ENCODE measurements at regions of chr19 and their contacts with region 1.

Region 1: DNA sequence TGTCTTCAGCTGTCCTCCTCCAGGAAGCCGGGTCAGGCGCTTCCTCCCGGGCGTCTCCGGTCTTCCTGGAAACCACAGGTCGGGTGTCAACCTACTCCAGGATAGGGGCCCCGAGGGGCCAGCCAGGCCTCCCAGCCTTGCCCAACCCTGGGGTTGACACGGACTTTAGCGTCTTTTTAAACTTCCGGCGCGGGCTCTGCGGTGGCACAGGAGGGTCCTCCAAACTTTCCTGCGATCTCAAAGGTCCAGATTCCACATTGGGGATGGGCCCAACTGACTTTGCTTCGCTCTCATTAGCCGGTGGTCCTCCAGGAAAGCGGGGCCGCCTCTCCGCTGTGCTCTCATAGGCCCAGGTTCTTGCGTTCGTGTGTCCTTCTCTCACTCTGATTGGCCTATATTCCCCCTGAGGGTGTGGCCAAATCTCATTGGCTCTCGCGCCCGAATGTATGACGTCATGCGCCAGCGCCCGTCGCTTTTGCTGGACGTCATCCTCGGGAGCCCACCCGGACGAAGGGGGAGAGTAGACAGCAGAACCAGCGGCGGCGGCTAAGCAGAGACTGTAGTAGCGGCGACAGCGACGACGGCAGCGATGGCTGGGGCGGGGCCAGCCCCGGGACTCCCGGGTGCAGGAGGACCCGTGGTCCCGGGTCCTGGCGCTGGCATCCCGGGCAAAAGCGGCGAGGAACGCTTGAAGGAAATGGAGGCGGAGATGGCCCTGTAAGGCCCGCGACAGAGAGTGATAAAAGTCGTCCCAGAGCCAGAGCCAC is at the start of gene RBM42:
- DNase-seq: peak; percentile 96
- total RNA-seq, gene RBM42: 56.2 TPM

Region 2: DNA sequence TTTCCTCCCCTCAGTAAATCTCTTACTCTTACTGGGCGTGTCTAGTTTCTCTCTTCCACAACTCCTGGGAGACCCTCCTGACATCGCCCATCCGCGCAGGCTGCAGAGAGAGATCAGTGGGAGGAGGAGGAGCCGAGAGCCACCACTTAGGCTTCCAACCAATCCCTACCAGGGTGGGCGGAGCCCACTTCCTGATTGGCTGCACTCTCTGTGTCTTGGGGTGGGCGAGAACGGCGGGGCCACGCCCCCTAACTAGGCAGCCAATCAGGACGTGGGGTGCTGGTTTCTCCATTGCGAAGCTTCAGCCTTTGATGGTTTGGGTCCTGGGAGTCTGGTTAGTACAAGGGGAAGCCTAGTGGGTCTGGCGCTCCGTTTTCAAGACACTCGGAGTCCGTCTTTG is 42.9 kb before region 1 on chr19 and contains the start of gene PMIS2:
- intact Hi-C with region 1: no loop called
- DNase-seq: no peak
- total RNA-seq, gene PMIS2: not detected

Region 3: GRCh38 chr19:35612559-35613321 is 16.0 kb before region 1 on chr19 and contains the start of gene HAUS5:
- intact Hi-C with region 1: loop called (anchors 2 kb)
- DNase-seq: peak; percentile 97
- total RNA-seq, gene HAUS5: 5.9 TPM

Region 4: DNA sequence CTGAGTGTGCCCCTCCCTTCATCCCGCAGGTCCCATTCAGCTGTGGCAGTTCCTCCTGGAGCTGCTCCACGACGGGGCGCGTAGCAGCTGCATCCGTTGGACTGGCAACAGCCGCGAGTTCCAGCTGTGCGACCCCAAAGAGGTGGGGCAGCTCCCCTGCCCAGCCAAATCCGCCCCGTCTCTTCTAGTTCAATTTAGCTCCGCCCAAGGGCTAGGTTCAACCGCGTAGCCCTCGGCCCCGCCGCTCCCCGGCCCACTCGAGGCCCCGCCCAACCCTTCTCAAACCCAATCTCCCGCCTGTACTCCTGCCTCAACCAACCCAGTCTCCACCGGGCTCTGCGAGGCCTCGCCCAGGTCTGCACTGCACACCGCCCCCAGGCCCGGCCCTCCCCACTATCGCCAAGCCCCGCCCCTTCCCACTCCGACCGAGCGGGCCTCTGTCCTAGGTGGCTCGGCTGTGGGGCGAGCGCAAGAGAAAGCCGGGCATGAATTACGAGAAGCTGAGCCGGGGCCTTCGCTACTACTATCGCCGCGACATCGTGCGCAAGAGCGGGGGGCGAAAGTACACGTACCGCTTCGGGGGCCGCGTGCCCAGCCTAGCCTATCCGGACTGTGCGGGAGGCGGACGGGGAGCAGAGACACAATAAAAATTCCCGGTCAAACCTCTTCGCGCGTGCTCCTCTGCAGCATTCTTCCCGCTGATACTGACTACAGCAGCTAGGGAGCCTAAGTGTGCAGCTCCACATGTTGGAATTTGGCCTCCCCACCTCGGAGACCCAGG is 15.6 kb after region 1 on chr19:
- intact Hi-C with region 1: loop called (anchors 2 kb)
- DNase-seq: peak; percentile 98